Activated CD4-positive, alpha-beta T cell treated with anti-CD3 and anti-CD28 coated beads, Interleukin-2, amount 10 ng/mL, durations not matched to agents 7 days and 5 days (primary cell): ENCODE measurements at regions of chr6 and their contacts with region 1.

Region 1: GRCh38 chr6:152301764-152302568 is 335.2 kb downstream of the SYNE1 start:
- DNase-seq: peak; percentile 91
- H3K4me3 Mint-ChIP-seq: peak overlapping the region; percentile 97
- H3K27ac Mint-ChIP-seq: peak overlapping the region; percentile 99
- H3K4me1 Mint-ChIP-seq: peaks cover 32% of the 10 kb centered on the region
- H3K27me3 Mint-ChIP-seq: no peaks in the 10 kb centered on the region

Region 2: DNA sequence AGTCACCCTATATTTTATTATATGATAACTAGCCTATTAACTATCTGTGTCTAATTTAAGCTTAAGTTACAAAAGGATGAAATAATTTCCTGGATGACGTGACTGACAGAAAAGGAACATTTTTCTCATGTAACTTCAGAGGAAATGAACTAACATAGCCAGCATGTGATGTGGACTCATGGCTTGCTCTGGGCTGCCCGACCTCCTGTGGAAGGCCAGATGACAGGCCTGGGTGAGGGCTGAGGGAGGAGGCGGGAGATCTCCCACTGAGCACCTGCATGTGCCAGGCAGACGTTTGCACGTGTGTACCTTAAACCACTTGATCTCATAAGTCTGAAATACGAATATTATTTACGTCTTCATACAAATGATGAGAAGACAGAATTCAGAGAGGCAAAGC is 14.1 kb after region 1 on chr6:
- CTCF ChIA-PET with region 1: interaction called, 16 read pairs
- POLR2A ChIA-PET with region 1: no interaction called
- DNase-seq: no peak
- H3K4me3 Mint-ChIP-seq: no peak overlapping the region
- H3K27ac Mint-ChIP-seq: no peak overlapping the region
- H3K4me1 Mint-ChIP-seq: peaks cover 8% of the 10 kb centered on the region
- H3K27me3 Mint-ChIP-seq: peaks cover 4% of the 10 kb centered on the region